Ascending aorta (tissue), 2 donors: ENCODE measurements at regions of chr9 and their contacts with region 1.

Region 1: GRCh38 chr9:128927731-128928411 is 7.1 kb downstream of the PHYHD1 start:
- DNase-seq: no peak
- H3K4me3 ChIP-seq: no peak overlapping the region
- H3K27ac ChIP-seq: no peak overlapping the region
- H3K4me1 ChIP-seq: peaks cover 3 to 14% of the 10 kb centered on the region in 2 donors
- H3K27me3 ChIP-seq: no peaks in the 10 kb centered on the region
- CTCF ChIP-seq: peak; percentile 89 to 93 (median 92)

Region 2: GRCh38 chr9:128847803-128848202 is 80.1 kb before region 1 on chr9:
- intact Hi-C with region 1: loop called (anchors 1 kb)
- DNase-seq: no peak
- H3K4me3 ChIP-seq: no peak overlapping the region
- H3K27ac ChIP-seq: no peak overlapping the region
- H3K4me1 ChIP-seq: no peaks in the 10 kb centered on the region
- H3K27me3 ChIP-seq: no peaks in the 10 kb centered on the region
- CTCF ChIP-seq: no peak

Region 3: DNA sequence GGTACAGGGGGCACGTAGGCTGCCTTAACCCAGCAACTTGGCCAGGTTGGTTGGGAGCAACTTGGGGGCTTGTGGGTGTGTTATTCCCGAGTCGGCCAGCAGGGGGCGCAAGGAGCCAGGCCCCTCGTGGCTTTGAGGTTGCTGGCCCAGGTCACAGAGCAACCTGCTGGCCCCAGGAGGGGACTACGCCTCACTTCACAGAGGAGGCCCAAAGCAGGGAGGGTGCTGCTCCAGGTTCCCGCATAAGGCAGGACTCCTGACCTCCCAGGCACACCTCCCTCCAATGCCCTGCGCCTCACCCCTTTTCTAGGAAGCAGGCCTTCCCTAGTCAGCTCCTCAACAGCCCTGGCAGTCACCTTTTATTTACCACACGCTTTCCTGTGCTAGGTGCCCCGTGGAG is 64.2 kb before region 1 on chr9:
- intact Hi-C with region 1: loop called (anchors 1 kb)
- DNase-seq: peak in 1 of 2 donors; percentile 84
- H3K4me3 ChIP-seq: no peak overlapping the region
- H3K27ac ChIP-seq: no peak overlapping the region
- H3K4me1 ChIP-seq: peaks cover 0 to 8% of the 10 kb centered on the region in 2 donors
- H3K27me3 ChIP-seq: no peaks in the 10 kb centered on the region
- CTCF ChIP-seq: peak; percentile 93 to 95 (median 94)

Region 4: GRCh38 chr9:129139993-129140396 is 212.1 kb after region 1 on chr9:
- intact Hi-C with region 1: no loop called
- DNase-seq: peak; percentile 91 to 98
- H3K4me3 ChIP-seq: peak overlapping the region; percentile 52 to 56
- H3K27ac ChIP-seq: peak overlapping the region; percentile 98
- H3K4me1 ChIP-seq: peaks cover 49 to 71% of the 10 kb centered on the region in 2 donors
- H3K27me3 ChIP-seq: no peaks in the 10 kb centered on the region
- CTCF ChIP-seq: no peak